CD8-positive, alpha-beta T cell (primary cell): ENCODE measurements at regions of chr11 and their contacts with region 1.

Region 1: GRCh38 chr11:19890308-19890707 is 177.7 kb downstream of the NAV2 start:
- DNase-seq: no peak
- ATAC-seq: no peak
- H3K4me3 ChIP-seq: no peak overlapping the region
- H3K4me3 Mint-ChIP-seq: no peak overlapping the region
- H3K27ac ChIP-seq: no peak overlapping the region
- H3K27ac Mint-ChIP-seq: no peak overlapping the region
- H3K4me1 ChIP-seq: no peaks in the 10 kb centered on the region
- H3K4me1 Mint-ChIP-seq: no peaks in the 10 kb centered on the region
- H3K27me3 ChIP-seq: no peaks in the 10 kb centered on the region
- H3K27me3 Mint-ChIP-seq: peaks cover 6% of the 10 kb centered on the region
- CTCF ChIP-seq: no peak

Region 2: DNA sequence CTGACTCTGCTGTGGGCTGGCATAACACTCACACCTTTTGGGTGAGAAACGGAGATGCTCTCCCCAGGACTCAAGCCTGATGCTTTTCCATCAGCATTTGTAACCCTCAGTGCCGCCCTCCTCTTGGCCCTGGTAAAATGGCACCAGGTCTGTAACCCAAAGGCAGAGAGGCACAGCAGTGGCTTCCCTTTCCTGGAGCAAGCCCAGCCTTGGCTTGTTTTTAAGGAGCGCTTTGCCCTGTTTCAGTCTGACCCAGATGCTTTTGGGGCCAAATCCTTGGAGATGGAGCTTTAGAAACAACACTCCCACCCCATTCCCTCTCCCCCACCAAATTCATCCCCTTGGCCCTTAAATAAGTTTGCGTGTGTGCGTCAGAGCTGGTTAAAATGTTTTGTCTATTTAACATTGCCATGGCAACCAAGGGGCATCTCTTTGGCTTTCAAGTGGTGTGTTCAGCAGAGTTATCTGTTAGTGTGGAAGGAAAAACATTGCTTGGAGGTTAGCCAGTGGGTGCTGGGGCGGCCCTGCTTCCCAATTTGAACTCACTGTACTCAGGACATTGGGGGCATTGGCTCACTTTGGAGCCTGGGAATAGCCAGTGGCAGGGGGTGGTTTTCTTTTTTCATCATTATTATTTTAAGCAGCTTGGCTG is 43.5 kb before region 1 on chr11:
- CTCF ChIA-PET with region 1: no interaction called
- POLR2A ChIA-PET with region 1: no interaction called
- intact Hi-C with region 1: loop called in 1 of 2 experiments (anchors 10 kb)
- DNase-seq: no peak
- ATAC-seq: no peak
- H3K4me3 ChIP-seq: no peak overlapping the region
- H3K4me3 Mint-ChIP-seq: no peak overlapping the region
- H3K27ac ChIP-seq: no peak overlapping the region
- H3K27ac Mint-ChIP-seq: no peak overlapping the region
- H3K4me1 ChIP-seq: no peaks in the 10 kb centered on the region
- H3K4me1 Mint-ChIP-seq: no peaks in the 10 kb centered on the region
- H3K27me3 ChIP-seq: no peaks in the 10 kb centered on the region
- H3K27me3 Mint-ChIP-seq: peaks cover 2% of the 10 kb centered on the region
- CTCF ChIP-seq: no peak

Region 3: GRCh38 chr11:19931141-19931770 is 40.9 kb after region 1 on chr11:
- CTCF ChIA-PET with region 1: no interaction called
- POLR2A ChIA-PET with region 1: no interaction called
- intact Hi-C with region 1: no loop called
- DNase-seq: no peak
- ATAC-seq: no peak
- H3K4me3 ChIP-seq: no peak overlapping the region
- H3K4me3 Mint-ChIP-seq: no peak overlapping the region
- H3K27ac ChIP-seq: no peak overlapping the region
- H3K27ac Mint-ChIP-seq: no peak overlapping the region
- H3K4me1 ChIP-seq: no peaks in the 10 kb centered on the region
- H3K4me1 Mint-ChIP-seq: no peaks in the 10 kb centered on the region
- H3K27me3 ChIP-seq: no peaks in the 10 kb centered on the region
- H3K27me3 Mint-ChIP-seq: peaks cover 3% of the 10 kb centered on the region
- CTCF ChIP-seq: no peak